Heart left ventricle (tissue), 16 donors: ENCODE measurements at regions of chr19 and their contacts with region 1.

Region 1: DNA sequence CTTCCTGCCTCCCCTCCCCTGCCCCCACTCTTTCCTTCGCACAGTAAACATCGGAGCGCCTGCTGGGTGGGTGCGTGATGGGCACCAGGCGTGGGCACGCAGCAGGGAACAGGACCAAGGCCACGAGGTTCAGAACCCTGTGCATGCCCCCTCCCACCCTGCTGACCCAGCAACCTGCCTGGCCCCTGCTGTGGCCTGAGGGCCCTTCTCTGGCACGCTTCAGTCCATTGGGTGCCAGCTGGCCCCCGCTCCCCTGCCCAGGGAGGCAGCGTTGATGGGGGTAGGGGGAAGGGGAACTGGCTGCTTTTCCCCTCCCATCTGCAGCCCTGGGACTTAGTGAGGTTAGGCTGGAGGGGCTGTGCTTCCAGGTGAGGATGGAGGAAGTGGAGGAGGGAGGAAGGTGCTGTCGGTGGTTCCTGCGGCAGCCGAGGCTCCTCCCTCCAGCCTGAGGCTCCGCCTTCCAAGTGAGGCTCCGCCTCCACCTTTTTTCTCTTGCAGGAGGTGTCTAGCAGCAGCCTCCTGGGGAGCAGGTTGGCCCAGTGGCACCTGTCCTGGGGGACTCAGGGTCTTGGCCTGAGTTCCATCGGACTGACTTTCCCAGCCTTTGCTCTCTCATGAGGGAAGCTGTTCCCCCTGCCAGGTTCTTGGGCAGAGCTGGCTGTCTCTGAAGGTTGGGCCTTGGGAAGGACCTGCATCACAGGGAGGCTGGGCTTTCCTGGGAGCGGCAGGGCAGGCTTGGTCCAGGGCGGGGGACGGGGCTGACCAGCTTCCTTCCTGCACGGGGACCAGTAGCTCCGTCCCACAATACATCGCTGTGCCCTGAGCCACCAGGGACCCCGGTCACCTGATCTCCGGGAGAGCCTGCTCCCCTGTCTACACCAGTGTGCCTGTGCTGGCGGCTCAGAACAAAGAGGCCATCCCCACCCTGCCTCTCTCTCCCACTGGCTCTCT is 7.3 kb downstream of the PIAS4 start:
- DNase-seq: peak; percentile 69 to 84 (median 74)
- ATAC-seq: peak; percentile 44 to 89 (median 60)
- H3K4me3 ChIP-seq: peak overlapping the region in 9 of 12 donors; percentile 25 to 43 (median 33)
- H3K27ac ChIP-seq: peak overlapping the region; percentile 51 to 87 (median 80)
- H3K4me1 ChIP-seq: peaks cover 3 to 79% (median 38%) of the 10 kb centered on the region in 12 donors
- H3K27me3 ChIP-seq: no peaks in the 10 kb centered on the region
- CTCF ChIP-seq: no peak
- POLR2A ChIP-seq: peak in 1 of 2 donors; percentile 54

Region 2: DNA sequence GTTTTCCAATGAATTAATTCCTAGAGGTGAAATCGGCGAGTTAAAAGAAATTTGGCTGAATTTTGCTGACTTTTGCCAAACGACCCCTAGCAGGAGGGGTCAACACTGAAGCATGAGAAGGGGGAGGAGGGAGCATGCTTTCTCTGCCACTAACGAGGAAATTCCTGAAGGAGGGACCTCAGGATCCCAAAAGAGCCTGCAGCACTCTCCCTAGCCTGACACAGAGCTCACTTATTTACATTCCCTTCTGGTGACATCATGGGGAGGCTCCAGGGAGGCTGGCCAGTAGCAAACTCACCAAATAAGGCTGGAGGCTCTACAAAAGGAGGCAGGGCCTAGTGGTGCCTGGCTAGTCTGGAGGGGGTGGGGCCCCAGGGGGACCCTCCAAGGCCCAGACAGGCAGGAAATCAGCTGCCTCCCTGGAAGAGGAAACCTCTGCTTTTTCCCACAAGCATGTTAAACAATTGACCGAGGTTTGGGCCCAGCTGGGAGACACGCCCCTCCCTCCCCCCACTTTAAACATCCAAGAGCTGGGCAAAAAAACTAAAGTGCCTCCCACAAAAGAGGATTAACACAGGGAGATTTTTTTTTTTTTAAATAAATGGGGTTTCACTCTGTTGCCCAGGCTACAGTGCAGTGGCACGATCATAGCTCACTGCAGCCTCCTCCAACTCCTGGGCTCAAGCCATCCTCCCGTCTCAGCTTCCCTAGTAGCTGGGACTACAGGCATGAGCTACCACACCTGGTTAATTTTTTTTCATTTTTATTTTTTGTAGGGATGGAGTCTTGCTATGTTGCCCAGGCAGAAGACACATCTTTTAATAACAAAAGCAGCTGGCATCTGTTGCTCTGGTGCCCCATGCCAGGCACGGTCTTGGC is 46.0 kb before region 1 on chr19:
- intact Hi-C with region 1: no loop called
- DNase-seq: peak; percentile 84 to 96 (median 94)
- ATAC-seq: peak; percentile 82 to 90 (median 83)
- H3K4me3 ChIP-seq: peak overlapping the region in 10 of 12 donors; percentile 61 to 100 (median 90)
- H3K27ac ChIP-seq: peak overlapping the region; percentile 84 to 100 (median 98)
- H3K4me1 ChIP-seq: peaks cover 17 to 57% (median 48%) of the 10 kb centered on the region in 12 donors
- H3K27me3 ChIP-seq: no peaks in the 10 kb centered on the region
- CTCF ChIP-seq: no peak
- POLR2A ChIP-seq: peak; percentile 37 to 63

Region 3: DNA sequence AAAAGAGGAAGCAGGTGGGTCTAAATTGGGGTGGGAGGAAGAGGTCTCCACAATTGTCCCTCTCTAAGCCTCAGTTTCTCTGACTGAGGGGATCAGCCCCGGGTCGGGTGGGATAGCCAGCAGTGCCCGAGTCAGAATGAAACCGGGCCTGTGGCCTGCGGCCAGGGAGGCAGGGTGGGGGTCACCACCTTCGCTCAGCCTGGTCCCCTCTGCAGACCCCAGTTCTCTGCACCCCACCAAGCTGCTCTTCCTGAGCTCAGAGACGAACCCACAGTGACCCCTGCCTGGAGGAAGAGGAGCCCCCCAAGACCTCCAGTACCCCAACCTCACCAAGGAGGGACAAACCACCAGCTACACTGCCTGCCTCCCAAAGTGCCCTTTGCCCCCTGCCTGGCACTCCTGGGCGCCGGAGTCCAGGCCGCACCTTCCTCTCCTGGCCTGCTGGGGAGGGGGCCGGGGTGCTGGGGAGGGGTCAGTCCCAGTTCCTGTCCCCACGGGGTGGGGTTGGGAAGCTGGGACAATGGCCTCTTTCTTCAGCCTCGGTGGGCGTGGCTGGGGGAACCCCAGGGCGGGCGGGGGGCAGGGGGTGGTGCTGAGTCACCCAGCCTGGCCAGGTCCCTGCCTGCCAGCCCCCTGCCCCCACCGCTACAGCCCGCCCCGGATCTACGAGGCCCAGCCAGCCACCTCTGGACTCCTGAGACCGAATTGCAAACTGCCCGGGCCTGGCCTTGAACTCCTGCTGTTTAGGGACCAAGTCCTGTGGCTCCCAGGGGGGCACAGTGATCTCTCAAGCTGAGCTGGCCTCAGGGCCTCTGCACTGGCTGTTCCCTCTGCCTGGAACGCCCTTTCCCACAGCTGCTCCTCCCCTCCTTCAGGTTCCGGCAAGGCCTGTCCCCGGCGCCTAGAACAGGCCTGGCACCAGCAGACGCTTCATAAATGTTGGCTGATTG is 37.5 kb after region 1 on chr19:
- intact Hi-C with region 1: loop called in 4 of 10 experiments (anchors 5 kb)
- DNase-seq: peak in 4 of 5 donors; percentile 55 to 70 (median 59)
- ATAC-seq: peak in 3 of 4 donors; percentile 31 to 66 (median 45)
- H3K4me3 ChIP-seq: peak overlapping the region in 4 of 12 donors; percentile 2 to 26 (median 12)
- H3K27ac ChIP-seq: peak overlapping the region in 11 of 12 donors; percentile 32 to 78 (median 59)
- H3K4me1 ChIP-seq: peaks cover 0 to 57% (median 30%) of the 10 kb centered on the region in 12 donors
- H3K27me3 ChIP-seq: no peaks in the 10 kb centered on the region
- CTCF ChIP-seq: no peak
- POLR2A ChIP-seq: no peak

Region 4: GRCh38 chr19:4058034-4058692 is 43.3 kb after region 1 on chr19:
- intact Hi-C with region 1: loop called in 5 of 10 experiments (anchors 5 kb)
- DNase-seq: peak; percentile 83 to 93 (median 89)
- ATAC-seq: peak; percentile 64 to 71 (median 70)
- H3K4me3 ChIP-seq: peak overlapping the region in 10 of 12 donors; percentile 10 to 84 (median 60)
- H3K27ac ChIP-seq: peak overlapping the region; percentile 87 to 99 (median 98)
- H3K4me1 ChIP-seq: peaks cover 17 to 76% (median 60%) of the 10 kb centered on the region in 12 donors
- H3K27me3 ChIP-seq: no peaks in the 10 kb centered on the region
- CTCF ChIP-seq: peak in 3 of 12 donors; percentile 13 to 22 (median 20)
- POLR2A ChIP-seq: peak in 1 of 2 donors; percentile 9

Region 5: GRCh38 chr19:4065430-4066175 is 50.8 kb after region 1 on chr19:
- intact Hi-C with region 1: loop called in 1 of 10 experiments (anchors 5 kb)
- DNase-seq: peak; percentile 98 to 99 (median 98)
- ATAC-seq: peak; percentile 80 to 91 (median 85)
- H3K4me3 ChIP-seq: peak overlapping the region in 11 of 12 donors; percentile 91 to 100 (median 97)
- H3K27ac ChIP-seq: peak overlapping the region; percentile 91 to 100 (median 99)
- H3K4me1 ChIP-seq: peaks cover 8 to 57% (median 44%) of the 10 kb centered on the region in 12 donors
- H3K27me3 ChIP-seq: no peaks in the 10 kb centered on the region
- CTCF ChIP-seq: peak in 1 of 12 donors; percentile 7
- POLR2A ChIP-seq: no peak

Region 6: DNA sequence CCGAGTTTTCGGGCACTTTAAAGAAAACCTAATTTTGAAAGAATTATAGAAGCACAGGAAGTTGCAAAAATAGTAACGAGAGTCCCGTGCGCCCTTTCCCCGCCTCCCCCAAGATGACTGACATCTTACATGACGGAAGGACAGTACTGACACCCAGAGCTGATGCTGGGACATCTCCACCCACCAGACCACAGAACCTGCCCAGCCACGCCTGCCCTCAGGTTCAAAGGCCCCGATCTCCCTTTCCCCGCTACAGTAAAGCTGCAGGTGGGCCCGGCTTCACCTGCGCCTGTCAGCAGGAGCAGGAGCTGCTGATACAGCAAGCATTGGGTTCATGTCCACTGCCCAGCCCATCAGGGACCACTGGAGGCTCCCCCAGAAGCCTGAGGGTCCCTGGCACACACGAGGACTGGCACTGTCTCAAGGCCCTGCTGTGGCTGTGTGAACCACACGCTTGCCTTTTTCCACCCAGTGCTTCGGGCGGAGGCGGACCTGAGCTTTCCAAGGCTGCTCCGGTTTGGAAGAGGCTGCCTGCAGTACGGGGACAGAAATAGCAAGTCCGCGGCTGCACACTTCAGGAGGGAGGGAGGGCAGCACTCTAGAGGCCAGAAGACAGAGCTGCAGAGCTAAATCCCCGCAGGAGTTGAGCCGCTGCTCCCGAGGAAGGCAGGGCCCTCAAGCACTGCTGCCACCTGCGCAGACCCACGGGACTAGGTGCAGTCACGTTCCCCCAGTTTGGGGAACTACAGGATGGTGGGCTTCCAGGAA is 100.4 kb after region 1 on chr19:
- intact Hi-C with region 1: loop called in 2 of 10 experiments (anchors 10 kb)
- DNase-seq: peak in 3 of 5 donors; percentile 53 to 71 (median 69)
- ATAC-seq: peak; percentile 61 to 86 (median 82)
- H3K4me3 ChIP-seq: peak overlapping the region in 3 of 12 donors; percentile 15 to 17 (median 16)
- H3K27ac ChIP-seq: peak overlapping the region in 7 of 12 donors; percentile 29 to 79 (median 64)
- H3K4me1 ChIP-seq: peaks cover 2 to 30% (median 19%) of the 10 kb centered on the region in 12 donors
- H3K27me3 ChIP-seq: no peaks in the 10 kb centered on the region
- CTCF ChIP-seq: peak in 3 of 12 donors; percentile 10 to 21 (median 15)
- POLR2A ChIP-seq: no peak

Region 7: DNA sequence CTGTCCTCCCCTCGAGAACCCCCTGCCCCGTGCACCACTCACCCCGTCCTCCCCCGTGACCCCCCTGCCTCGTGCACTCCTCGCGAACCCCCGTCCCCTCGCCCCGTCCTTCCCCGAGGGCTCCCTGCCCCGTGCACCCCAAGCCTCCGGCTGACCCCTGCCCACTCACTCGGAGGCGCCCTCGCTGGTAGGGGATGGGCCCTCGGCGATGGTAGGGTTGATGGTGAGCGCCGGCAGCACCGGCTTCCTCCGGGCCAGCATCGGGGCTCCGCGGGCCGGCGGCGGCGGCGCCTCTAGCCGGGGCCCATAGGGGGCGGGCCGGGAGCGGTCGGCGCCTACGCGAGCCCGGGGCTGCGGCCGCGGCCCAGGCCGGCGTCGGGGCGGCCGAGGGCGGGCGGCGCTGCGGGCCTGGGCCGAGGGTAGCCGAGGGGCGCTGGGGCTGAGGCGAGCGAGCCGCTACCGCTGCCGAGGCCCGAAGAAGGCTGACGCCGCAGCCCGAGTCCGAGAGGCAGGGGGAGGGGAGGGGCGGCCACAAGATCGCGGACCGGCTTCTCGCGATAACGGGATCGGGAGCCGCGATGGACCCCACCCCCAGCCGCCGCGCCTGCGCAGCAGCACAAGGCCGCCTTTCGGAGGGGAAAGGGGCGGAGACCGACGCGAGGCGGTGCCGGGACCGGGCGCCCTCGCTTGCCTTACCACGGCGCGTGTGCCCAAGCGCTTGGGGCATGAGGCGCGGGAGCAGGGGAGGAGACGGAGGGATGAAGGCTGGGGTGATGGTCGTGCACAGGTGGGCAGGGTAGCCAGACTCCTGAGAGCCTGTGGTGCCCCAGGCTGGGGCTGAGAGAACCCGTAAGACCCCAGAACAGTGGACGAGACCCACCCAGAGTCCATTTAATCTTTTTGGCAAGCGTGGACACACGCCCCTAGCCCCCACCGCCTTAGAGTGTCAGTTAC is 109.1 kb after region 1 on chr19 and contains the start of gene MAP2K2:
- intact Hi-C with region 1: loop called in 2 of 10 experiments (anchors 10 kb)
- DNase-seq: peak; percentile 95 to 98 (median 96)
- ATAC-seq: peak; percentile 92 to 99 (median 98)
- H3K4me3 ChIP-seq: peak within 1 kb of the TSS; percentile 44 to 95 (median 78)
- H3K27ac ChIP-seq: peak within 1 kb of the TSS in 11 of 12 donors; percentile 31 to 84 (median 72)
- H3K4me1 ChIP-seq: peaks cover 0 to 33% (median 16%) of the 10 kb centered on the region in 12 donors
- H3K27me3 ChIP-seq: no peaks in the 10 kb centered on the region
- CTCF ChIP-seq: peak in 2 of 12 donors; percentile 17 to 22
- POLR2A ChIP-seq: peak in 1 of 2 donors; percentile 86
- total RNA-seq, gene MAP2K2: 95.3 to 154 (median 108) TPM

Region 8: DNA sequence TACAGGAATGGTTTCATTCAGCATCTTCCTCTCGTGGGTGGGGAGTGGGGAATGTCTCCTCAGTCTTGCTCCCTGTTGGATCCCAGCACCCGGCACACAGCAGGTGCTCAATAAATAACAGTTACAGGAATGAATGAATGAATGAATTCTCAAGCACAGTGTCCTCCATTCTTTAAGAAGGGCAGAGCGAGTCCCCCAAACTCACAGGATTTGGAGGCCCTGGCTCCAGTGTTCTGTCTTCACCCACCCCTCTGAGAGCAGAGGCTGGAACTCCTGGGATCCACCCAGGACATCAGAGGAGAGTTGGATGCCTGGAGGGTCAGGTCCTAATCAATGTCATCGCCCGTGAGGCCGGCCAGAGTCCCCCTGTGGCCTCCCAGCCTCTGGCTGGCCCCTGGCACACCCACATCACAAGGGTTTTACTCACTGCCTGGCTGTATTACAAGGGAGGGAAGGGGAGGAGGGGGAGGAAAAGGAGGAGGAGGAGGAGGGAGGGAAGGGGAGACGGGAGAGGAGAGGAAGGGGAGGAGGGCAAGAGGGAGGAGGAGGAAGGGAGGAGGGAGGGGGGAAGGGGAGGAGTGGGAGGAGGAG is 129.9 kb after region 1 on chr19:
- intact Hi-C with region 1: no loop called
- DNase-seq: peak in 1 of 5 donors; percentile 26
- ATAC-seq: peak in 2 of 4 donors; percentile 22 to 38
- H3K4me3 ChIP-seq: no peak overlapping the region
- H3K27ac ChIP-seq: no peak overlapping the region
- H3K4me1 ChIP-seq: peaks cover 0 to 13% (median 0%) of the 10 kb centered on the region in 12 donors
- H3K27me3 ChIP-seq: peaks cover 0 to 23% (median 0%) of the 10 kb centered on the region in 9 donors
- CTCF ChIP-seq: no peak
- POLR2A ChIP-seq: no peak